IMR-90 (cell line): ENCODE measurements at regions of chr6 and their contacts with region 1.

Region 1: DNA sequence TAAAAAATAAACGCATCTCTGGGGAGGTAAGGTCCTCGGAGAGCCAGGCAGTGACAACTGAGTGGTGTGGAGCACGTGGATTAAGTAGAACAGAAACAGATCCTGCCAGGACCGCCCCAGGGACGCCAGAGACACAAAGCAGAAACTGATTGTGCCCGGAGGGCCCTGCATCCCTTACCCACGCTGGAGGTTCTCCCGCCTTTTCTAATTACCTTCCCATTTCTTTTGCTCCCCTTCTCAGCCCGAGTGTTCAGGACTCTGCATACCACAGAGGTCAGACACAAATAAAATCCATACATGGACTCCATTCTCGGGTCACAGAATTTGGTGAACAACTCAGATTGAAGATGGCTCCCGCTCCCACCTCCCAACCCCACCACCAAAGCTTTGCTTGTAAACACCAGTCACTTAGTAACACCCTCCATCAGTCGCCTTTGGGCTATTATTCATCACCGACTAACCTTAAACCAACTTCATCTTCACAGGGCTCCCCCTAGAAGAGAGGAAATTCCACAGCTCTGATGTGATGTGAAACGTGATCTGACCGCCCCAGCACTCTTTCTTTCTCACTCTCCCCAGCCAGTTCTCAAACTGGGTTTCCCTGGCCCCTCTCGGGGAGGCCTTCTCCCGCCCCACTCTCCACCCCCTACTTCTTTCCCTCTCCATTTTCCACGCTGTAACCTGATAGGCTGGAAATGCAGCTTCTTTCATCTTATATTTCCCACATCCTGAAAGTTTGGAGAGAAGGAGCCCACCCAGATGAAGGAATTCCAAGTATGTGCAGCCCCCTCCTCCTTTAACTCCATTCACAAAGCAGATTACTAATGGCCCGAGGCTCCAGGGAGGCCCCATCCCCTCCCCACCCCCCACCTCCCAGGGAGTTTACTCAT is 32.5 kb upstream of the PIM1 start:
- DNase-seq: peak; percentile 99
- ATAC-seq: peak; percentile 79
- H3K4me3 ChIP-seq: peak overlapping the region; percentile 4; the same call in 1 of the 2 replicates
- H3K27ac ChIP-seq: peak overlapping the region; percentile 85
- H3K4me1 ChIP-seq: peaks cover 47% of the 10 kb centered on the region
- H3K27me3 ChIP-seq: no peaks in the 10 kb centered on the region
- CTCF ChIP-seq: 0 out of 2 replicates have a peak, but pooled peaks have one; percentile 1
- POLR2A ChIP-seq: peak; percentile 24; the same call in 1 of the 2 replicates
- RAD21 ChIP-seq: peak; percentile 39

Region 2: GRCh38 chr6:36594029-36594815 is 543.2 kb before region 1 on chr6 and contains the start of gene SRSF3:
- CTCF ChIA-PET with region 1: no interaction called
- POLR2A ChIA-PET with region 1: interaction called, 11 read pairs
- dilution Hi-C with region 1: no loop called
- in situ Hi-C with region 1: no loop called
- intact Hi-C with region 1: no loop called
- DNase-seq: peak; percentile 98
- ATAC-seq: peak; percentile 91
- H3K4me3 ChIP-seq: peak within 1 kb of the TSS; percentile 72
- H3K27ac ChIP-seq: peak within 1 kb of the TSS; percentile 95
- H3K4me1 ChIP-seq: peaks cover 5% of the 10 kb centered on the region; the same call in 1 of the 2 replicates
- H3K27me3 ChIP-seq: no peaks in the 10 kb centered on the region
- CTCF ChIP-seq: peak; percentile 43
- POLR2A ChIP-seq: peak; percentile 100
- RAD21 ChIP-seq: 0 out of 2 replicates have a peak, but pooled peaks have one; percentile 25
- total RNA-seq, gene SRSF3: 237 and 256 TPM in 2 replicates

Region 3: DNA sequence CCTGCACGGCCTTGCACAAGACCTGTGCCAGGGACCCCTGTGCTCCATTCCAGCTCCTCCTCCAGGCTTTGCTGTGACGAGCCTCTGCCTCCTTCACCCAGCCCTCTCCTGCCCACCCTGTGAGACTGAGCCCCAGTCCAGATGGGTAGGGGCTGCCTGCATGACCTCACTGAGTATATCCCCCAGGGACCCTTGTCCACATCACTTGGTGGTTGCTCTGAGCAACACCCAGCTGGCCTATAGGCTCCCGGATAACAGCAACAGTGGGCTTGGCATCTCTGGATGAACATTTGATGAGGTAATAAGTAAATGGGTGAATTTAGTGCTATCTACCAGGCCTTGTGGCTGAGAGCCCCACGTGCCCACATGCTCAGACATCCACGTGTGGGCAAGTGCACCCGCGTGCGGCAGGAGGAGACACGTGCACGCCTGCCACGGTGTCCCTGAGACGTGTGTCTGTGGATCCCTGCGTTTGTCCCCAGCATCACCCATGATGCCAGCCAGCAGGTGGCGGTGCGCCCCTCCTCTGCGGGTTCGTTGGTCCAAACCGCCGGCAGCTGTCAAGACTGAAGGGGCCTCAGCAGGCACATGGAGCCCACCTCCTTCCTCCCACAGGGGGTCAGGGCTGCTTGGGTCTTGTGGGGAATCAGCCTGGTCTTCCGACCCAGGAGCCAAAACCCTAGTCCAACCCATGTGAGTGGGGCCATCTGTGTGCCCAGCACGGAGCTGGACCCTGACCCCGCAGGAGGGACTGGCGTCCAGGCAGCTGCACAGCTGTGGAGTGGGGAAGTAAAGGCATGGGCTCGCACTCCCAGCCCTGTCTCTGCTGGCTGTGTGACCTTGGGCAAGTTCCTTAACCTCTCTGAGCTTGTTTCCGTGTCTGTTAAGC is 86.1 kb before region 1 on chr6:
- CTCF ChIA-PET with region 1: interaction called, 3 read pairs
- POLR2A ChIA-PET with region 1: interaction called, 13 read pairs
- dilution Hi-C with region 1: no loop called
- in situ Hi-C with region 1: no loop called
- intact Hi-C with region 1: no loop called
- DNase-seq: peak; percentile 61
- ATAC-seq: peak; percentile 85
- H3K4me3 ChIP-seq: no peak overlapping the region
- H3K27ac ChIP-seq: no peak overlapping the region
- H3K4me1 ChIP-seq: peaks cover 6% of the 10 kb centered on the region
- H3K27me3 ChIP-seq: no peaks in the 10 kb centered on the region
- CTCF ChIP-seq: peak; percentile 95
- POLR2A ChIP-seq: peak; percentile 58
- RAD21 ChIP-seq: peak; percentile 95

Region 4: GRCh38 chr6:37059344-37060206 is 77.9 kb before region 1 on chr6:
- CTCF ChIA-PET with region 1: interaction called, 3 read pairs
- POLR2A ChIA-PET with region 1: no interaction called
- dilution Hi-C with region 1: no loop called
- in situ Hi-C with region 1: no loop called
- intact Hi-C with region 1: loop called (anchors 2 kb)
- DNase-seq: peak; percentile 97
- ATAC-seq: peak; percentile 88
- H3K4me3 ChIP-seq: peak overlapping the region; percentile 1; the same call in 1 of the 2 replicates
- H3K27ac ChIP-seq: peak overlapping the region; percentile 81
- H3K4me1 ChIP-seq: peaks cover 12% of the 10 kb centered on the region
- H3K27me3 ChIP-seq: no peaks in the 10 kb centered on the region
- CTCF ChIP-seq: peak; percentile 86
- POLR2A ChIP-seq: peak; percentile 63; the same call in 1 of the 2 replicates
- RAD21 ChIP-seq: peak; percentile 87

Region 5: DNA sequence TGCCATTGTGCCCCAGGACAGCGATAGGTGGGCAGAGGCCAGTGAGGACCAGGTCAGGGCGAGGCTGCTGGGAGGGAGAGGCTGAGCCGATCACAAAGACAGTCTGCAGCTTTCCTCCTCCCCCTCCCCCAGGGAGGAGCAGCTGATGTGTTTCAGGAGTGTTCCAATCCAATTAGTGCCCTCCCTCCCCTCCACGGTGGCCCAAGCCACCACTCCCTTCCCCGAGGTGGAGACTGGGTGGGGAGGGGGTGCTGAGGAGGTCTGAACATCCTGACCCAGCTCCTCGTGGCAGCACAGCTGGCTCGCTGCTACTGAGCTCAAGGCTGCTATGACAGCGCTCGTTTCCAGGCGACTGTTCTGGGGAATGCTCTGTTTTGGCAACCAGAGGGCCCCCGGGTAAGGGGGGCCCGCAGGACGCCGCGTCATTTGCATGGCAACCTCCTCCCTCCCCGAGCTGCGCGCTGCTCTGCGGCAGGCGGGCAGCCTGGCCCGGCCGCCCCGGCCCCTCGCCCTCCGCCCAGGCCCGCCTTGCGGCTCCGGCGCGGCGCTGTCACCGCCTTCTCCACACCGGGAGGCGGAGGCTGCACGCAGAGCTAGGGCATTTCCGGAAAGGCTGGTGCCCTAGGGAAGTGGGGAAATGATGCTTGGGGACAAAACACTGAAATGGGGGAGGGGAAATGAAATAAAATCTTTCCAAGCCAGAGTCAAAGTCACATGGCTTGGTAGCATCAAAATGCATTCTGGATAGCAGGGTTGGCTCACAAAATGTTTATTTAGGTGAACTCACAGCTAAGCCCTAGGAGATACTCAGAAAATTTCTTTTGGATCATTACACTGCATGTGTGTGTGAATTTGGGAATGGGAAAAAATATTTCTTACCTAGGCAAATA is 34.9 kb before region 1 on chr6:
- CTCF ChIA-PET with region 1: no interaction called
- POLR2A ChIA-PET with region 1: no interaction called
- dilution Hi-C with region 1: no loop called
- in situ Hi-C with region 1: no loop called
- intact Hi-C with region 1: loop called (anchors 2 kb)
- DNase-seq: peak; percentile 88
- ATAC-seq: peak; percentile 94
- H3K4me3 ChIP-seq: peak overlapping the region; percentile 39
- H3K27ac ChIP-seq: peak overlapping the region; percentile 37
- H3K4me1 ChIP-seq: peaks cover 12% of the 10 kb centered on the region
- H3K27me3 ChIP-seq: no peaks in the 10 kb centered on the region
- CTCF ChIP-seq: 0 out of 2 replicates have a peak, but pooled peaks have one; percentile 18
- POLR2A ChIP-seq: peak; percentile 62; the same call in 1 of the 2 replicates
- RAD21 ChIP-seq: 0 out of 2 replicates have a peak, but pooled peaks have one; percentile 5

Region 6: DNA sequence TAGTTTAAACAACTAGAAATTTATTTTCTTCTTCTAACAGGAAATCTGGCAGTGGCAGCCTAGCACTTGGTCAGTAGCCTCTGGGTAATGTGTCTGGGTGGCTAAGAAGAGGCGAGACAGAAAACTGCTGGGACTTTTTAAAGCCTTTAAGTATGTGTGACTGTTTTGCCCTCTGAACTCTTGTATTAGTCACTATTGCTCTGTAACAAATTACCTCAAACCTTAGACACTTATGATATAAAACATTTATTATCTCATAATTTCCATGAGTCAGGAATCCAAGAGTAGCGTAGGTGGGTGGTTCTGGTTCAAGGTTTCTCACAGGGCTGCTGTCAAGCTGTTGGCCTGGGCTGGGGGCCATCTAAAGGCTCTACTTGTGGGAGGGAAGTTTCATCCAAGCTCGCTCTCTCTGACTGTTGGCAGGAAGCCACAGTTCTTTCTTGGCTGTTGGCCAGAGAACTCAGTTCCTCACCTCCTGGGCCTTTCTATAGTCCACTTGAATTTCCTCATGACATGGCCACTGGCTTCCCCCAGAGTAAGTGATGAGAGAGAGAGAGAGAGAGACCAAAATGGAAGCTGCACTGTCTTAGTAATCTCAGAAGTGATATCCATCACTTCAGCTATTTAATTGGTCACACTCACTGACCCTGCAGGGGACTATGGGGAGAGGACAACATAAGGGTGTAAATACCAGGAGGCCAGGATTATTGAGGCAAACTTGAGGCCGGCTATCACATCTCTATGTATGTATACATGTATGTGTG is 102.7 kb after region 1 on chr6:
- CTCF ChIA-PET with region 1: no interaction called
- POLR2A ChIA-PET with region 1: no interaction called
- dilution Hi-C with region 1: no loop called
- in situ Hi-C with region 1: no loop called
- intact Hi-C with region 1: loop called (anchors 5 kb)
- DNase-seq: peak; percentile 99
- ATAC-seq: peak; percentile 33
- H3K4me3 ChIP-seq: no peak overlapping the region
- H3K27ac ChIP-seq: peak overlapping the region; percentile 69
- H3K4me1 ChIP-seq: peaks cover 30% of the 10 kb centered on the region
- H3K27me3 ChIP-seq: no peaks in the 10 kb centered on the region
- CTCF ChIP-seq: no peak
- POLR2A ChIP-seq: peak; percentile 92
- RAD21 ChIP-seq: peak; percentile 1; the same call in 1 of the 2 replicates